Endothelial cell of umbilical vein (primary cell): ENCODE measurements at regions of chr7 and their contacts with region 1.

Region 1: GRCh38 chr7:55365675-55366460 is 731 bp downstream of the LANCL2 start:
- DNase-seq: peak; percentile 94
- H3K4me3 ChIP-seq: peak overlapping the region; percentile 41 to 79 (median 69)
- H3K27ac ChIP-seq: peak overlapping the region; percentile 88
- H3K4me1 ChIP-seq: peaks cover 24% of the 10 kb centered on the region
- H3K27me3 ChIP-seq: peaks cover 0 to 2% of the 10 kb centered on the region in 2 experiments
- CTCF ChIP-seq: peak; percentile 12 to 30
- POLR2A ChIP-seq: peak; percentile 70

Region 2: GRCh38 chr7:54758702-54759592 is 606.9 kb before region 1 on chr7 and contains the start of gene SEC61G:
- CTCF ChIA-PET with region 1: no interaction called
- POLR2A ChIA-PET with region 1: interaction called, 3 read pairs
- dilution Hi-C with region 1: no loop called
- intact Hi-C with region 1: loop called (anchors 2 kb)
- DNase-seq: peak; percentile 97
- H3K4me3 ChIP-seq: peak within 1 kb of the TSS; percentile 86 to 94 (median 89)
- H3K27ac ChIP-seq: peak within 1 kb of the TSS; percentile 69
- H3K4me1 ChIP-seq: peaks cover 20% of the 10 kb centered on the region
- H3K27me3 ChIP-seq: peaks cover 0 to under 1% of the 10 kb centered on the region in 2 experiments
- CTCF ChIP-seq: no peak
- POLR2A ChIP-seq: peak; percentile 97
- total RNA-seq, gene SEC61G: 201 and 206 TPM in 2 replicates

Region 3: GRCh38 chr7:55245271-55245723 is 120.6 kb before region 1 on chr7:
- CTCF ChIA-PET with region 1: no interaction called
- POLR2A ChIA-PET with region 1: no interaction called
- dilution Hi-C with region 1: no loop called
- intact Hi-C with region 1: no loop called
- DNase-seq: no peak
- H3K4me3 ChIP-seq: no peak overlapping the region
- H3K27ac ChIP-seq: no peak overlapping the region
- H3K4me1 ChIP-seq: no peaks in the 10 kb centered on the region
- H3K27me3 ChIP-seq: peaks cover 0 to 6% of the 10 kb centered on the region in 2 experiments
- CTCF ChIP-seq: no peak
- POLR2A ChIP-seq: no peak

Region 4: GRCh38 chr7:55280031-55280454 is 85.8 kb before region 1 on chr7:
- CTCF ChIA-PET with region 1: interaction called, 6 read pairs
- POLR2A ChIA-PET with region 1: no interaction called
- dilution Hi-C with region 1: no loop called
- intact Hi-C with region 1: loop called (anchors 2 kb)
- DNase-seq: peak; percentile 67
- H3K4me3 ChIP-seq: no peak overlapping the region
- H3K27ac ChIP-seq: no peak overlapping the region
- H3K4me1 ChIP-seq: no peaks in the 10 kb centered on the region
- H3K27me3 ChIP-seq: peaks cover 0 to 3% of the 10 kb centered on the region in 2 experiments
- CTCF ChIP-seq: peak; percentile 48 to 51
- POLR2A ChIP-seq: no peak

Region 5: GRCh38 chr7:55415173-55415778 is 49.4 kb after region 1 on chr7:
- CTCF ChIA-PET with region 1: interaction called, 12 read pairs
- POLR2A ChIA-PET with region 1: no interaction called
- dilution Hi-C with region 1: no loop called
- intact Hi-C with region 1: loop called (anchors 1 kb)
- DNase-seq: peak; percentile 84
- H3K4me3 ChIP-seq: no peak overlapping the region
- H3K27ac ChIP-seq: no peak overlapping the region
- H3K4me1 ChIP-seq: peaks cover 1% of the 10 kb centered on the region
- H3K27me3 ChIP-seq: no peaks in the 10 kb centered on the region
- CTCF ChIP-seq: peak; percentile 72 to 74
- POLR2A ChIP-seq: no peak

Region 6: GRCh38 chr7:55572378-55573233 is 206.7 kb after region 1 on chr7 and contains the start of gene VOPP1:
- CTCF ChIA-PET with region 1: no interaction called
- POLR2A ChIA-PET with region 1: no interaction called
- dilution Hi-C with region 1: no loop called
- intact Hi-C with region 1: loop called (anchors 5 kb)
- DNase-seq: peak; percentile 61
- H3K4me3 ChIP-seq: peak within 1 kb of the TSS; percentile 89 to 99 (median 97)
- H3K27ac ChIP-seq: peak within 1 kb of the TSS; percentile 97
- H3K4me1 ChIP-seq: peaks cover 55% of the 10 kb centered on the region
- H3K27me3 ChIP-seq: no peaks in the 10 kb centered on the region
- CTCF ChIP-seq: no peak
- POLR2A ChIP-seq: peak; percentile 41
- total RNA-seq, gene VOPP1: 154 and 159 TPM in 2 replicates

Region 7: DNA sequence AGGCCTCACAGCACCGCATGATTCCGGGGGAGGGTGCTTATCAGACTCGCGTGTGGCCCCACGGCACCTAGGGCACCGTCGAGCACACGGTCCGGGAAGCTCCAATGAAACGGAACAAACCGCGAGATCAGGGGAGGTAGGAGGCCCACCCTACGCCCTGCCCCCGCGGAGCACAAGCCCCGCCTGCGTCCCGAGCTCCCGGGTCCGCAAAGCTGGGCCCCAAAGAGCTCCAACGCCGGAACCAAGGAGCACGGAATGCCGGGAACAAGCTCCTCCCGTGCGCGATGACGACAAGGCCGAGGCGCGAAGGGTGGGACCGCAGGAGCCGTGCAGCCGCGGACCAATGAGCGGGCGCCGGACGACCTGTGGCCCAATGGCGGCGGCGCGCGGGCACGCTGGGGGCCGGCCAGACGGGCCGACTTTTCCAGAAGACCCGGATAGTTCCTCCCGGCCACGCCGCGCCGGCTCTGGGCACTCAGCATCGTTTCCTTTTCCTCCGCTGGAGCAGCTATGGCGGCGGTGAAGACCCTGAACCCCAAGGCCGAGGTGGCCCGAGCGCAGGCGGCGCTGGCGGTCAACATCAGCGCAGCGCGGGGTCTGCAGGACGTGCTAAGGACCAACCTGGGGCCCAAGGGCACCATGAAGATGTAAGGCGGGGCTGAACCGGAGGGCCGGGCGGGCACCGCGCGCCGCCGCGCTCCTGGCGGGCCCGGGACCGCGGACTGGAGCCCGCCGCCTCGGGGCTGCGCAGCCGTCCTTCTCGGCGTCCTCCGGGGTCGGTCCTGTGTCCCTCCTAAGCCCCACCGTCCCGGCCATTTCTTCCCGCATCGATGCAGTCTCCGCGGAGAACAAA is 685.7 kb after region 1 on chr7 and contains the starts of genes CCT6A and PSPH:
- CTCF ChIA-PET with region 1: no interaction called
- POLR2A ChIA-PET with region 1: no interaction called
- dilution Hi-C with region 1: no loop called
- intact Hi-C with region 1: loop called (anchors 5 kb)
- DNase-seq: peak; percentile 99
- H3K4me3 ChIP-seq: peak within 1 kb of the TSS; percentile 86 to 99 (median 88)
- H3K27ac ChIP-seq: peak within 1 kb of the TSS; percentile 83
- H3K4me1 ChIP-seq: peaks cover 45% of the 10 kb centered on the region
- H3K27me3 ChIP-seq: no peaks in the 10 kb centered on the region
- CTCF ChIP-seq: no peak
- POLR2A ChIP-seq: peak; percentile 88
- total RNA-seq, gene CCT6A: 210 and 221 TPM in 2 replicates
- total RNA-seq, gene PSPH: 20.3 and 24.2 TPM in 2 replicates